ENCODE measurements at regions of chr10 and their contacts with region 1.

Region 1: DNA sequence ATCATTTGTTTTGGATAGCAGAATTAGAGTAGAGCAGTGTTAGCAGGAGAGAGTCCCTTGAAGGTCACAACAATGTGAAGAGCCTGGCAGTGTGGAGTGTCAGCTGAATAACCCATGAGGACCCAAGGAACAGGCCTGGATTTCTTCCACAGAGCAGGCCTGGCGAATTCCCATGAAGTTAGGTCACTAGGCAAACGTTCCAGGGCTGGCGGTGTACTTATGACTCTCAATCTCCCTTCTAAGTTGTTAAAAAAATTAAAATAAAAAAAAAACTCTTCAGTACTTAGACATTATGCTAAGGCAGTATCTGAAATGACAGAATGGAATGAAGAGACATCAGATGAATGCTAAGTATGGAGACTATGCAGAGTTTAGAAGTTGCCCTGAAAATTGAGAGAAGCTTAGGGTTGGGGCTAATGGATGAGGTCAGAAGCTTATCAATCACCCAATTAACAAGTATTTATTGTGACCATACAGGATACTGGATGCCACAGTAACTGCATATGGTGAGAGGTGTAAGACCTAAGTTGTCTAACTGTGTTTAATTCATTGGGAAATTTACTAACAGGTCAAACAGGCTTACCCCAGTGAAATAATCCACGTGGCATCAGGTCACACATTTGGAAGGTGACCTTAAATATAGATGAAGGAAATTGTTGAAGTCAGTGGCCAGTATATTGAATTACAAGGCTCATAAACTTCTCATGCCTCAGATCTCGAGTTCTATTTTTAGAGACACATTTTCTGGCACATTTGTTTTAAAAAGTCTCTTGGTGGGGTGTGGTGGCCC is 126.2 kb upstream of the NRP1 start:
- DNase-seq: peak; percentile 70 to 85
- H3K4me3 ChIP-seq: no peak overlapping the region
- H3K27ac ChIP-seq: peak overlapping the region; percentile 29 to 58
- H3K4me1 ChIP-seq: peaks cover 0 to 36% (median 17%) of the 10 kb centered on the region in 4 donors
- H3K27me3 ChIP-seq: no peaks in the 10 kb centered on the region
- CTCF ChIP-seq: no peak

Region 2: GRCh38 chr10:35195361-35196306 is 1734.9 kb after region 1 on chr10:
- intact Hi-C with region 1: loop called (anchors 5 kb)
- DNase-seq: peak; percentile 61 to 88
- H3K4me3 ChIP-seq: peak overlapping the region; percentile 48 to 57
- H3K27ac ChIP-seq: peak overlapping the region; percentile 90 to 91
- H3K4me1 ChIP-seq: peaks cover 0 to 15% (median 0%) of the 10 kb centered on the region in 4 donors
- H3K27me3 ChIP-seq: no peaks in the 10 kb centered on the region
- CTCF ChIP-seq: peak; percentile 85 to 87

Measured in tibial artery (tissue), 4 donors.